Common myeloid progenitor, CD34-positive (primary cell): ENCODE measurements at regions of chr15 and their contacts with region 1.

Region 1: GRCh38 chr15:78437762-78438302 is at the start of gene IREB2:
- DNase-seq: peak; percentile 99
- H3K4me3 ChIP-seq: peak within 1 kb of the TSS; percentile 67 to 96 (median 93)
- H3K27ac ChIP-seq: peak within 1 kb of the TSS; percentile 97 to 99
- H3K4me1 ChIP-seq: peaks cover 8 to 34% (median 25%) of the 10 kb centered on the region in 4 experiments
- H3K27me3 ChIP-seq: no peaks in the 10 kb centered on the region

Region 2: GRCh38 chr15:78382114-78382880 is 55.5 kb before region 1 on chr15:
- CTCF ChIA-PET with region 1: no interaction called
- POLR2A ChIA-PET with region 1: no interaction called
- DNase-seq: no peak
- H3K4me3 ChIP-seq: no peak overlapping the region
- H3K27ac ChIP-seq: no peak overlapping the region
- H3K4me1 ChIP-seq: no peaks in the 10 kb centered on the region
- H3K27me3 ChIP-seq: peaks cover 0 to 3% (median 0%) of the 10 kb centered on the region in 5 experiments

Region 3: DNA sequence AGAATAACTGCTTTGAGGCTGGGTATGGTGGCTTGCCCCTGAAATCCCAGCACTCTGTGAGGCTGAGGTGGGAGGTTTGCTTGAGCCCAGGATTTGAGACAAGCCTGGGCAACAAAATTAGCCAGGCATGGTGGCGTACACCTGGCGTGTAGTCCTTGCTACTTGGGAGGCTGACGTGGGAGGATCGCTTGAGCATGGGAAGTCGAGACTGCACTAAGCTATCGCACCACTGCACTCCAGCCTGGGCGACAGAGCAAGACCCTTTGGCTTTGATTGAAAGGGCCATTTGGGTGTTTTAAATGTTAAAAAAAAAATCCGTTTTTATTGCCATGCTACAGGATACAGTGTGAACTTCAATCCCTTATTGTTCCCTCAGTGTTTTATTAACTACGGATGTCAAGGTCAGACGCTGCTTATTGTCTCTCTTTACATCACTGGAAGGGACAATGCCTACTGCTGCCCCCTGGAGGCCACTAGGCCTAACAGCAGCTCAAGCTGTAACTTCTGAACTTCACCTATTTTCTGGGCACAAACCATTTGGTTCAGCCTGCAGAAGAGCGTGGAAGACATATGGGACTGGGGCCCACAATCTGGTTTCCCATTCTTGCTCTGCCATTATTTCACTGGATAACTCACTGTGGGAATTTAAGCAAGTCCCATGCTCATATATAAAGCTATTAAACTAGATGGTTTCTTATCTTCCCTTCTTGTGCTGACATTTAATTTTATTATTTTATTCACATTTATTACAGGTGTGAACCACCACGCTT is 15.1 kb before region 1 on chr15:
- CTCF ChIA-PET with region 1: interaction called, 29 read pairs
- POLR2A ChIA-PET with region 1: interaction called, 4 read pairs
- DNase-seq: peak; percentile 64 to 78 (median 73)
- H3K4me3 ChIP-seq: no peak overlapping the region
- H3K27ac ChIP-seq: no peak overlapping the region
- H3K4me1 ChIP-seq: peaks cover 13 to 52% (median 37%) of the 10 kb centered on the region in 4 experiments
- H3K27me3 ChIP-seq: no peaks in the 10 kb centered on the region